CD8-positive, alpha-beta T cell (primary cell): ENCODE measurements at regions of chr20 and their contacts with region 1.

Region 1: GRCh38 chr20:45771182-45771759 is 20.4 kb downstream of the WFDC3 start:
- DNase-seq: peak; percentile 58 to 87 (median 80)
- ATAC-seq: peak; percentile 90
- H3K4me3 ChIP-seq: no peak overlapping the region
- H3K4me3 Mint-ChIP-seq: no peak overlapping the region
- H3K27ac ChIP-seq: no peak overlapping the region
- H3K27ac Mint-ChIP-seq: no peak overlapping the region
- H3K4me1 ChIP-seq: peaks cover 4% of the 10 kb centered on the region
- H3K4me1 Mint-ChIP-seq: peaks cover 5% of the 10 kb centered on the region
- H3K27me3 ChIP-seq: no peaks in the 10 kb centered on the region
- H3K27me3 Mint-ChIP-seq: peaks cover 19% of the 10 kb centered on the region
- CTCF ChIP-seq: peak; percentile 91

Region 2: GRCh38 chr20:45311589-45312211 is 459.6 kb before region 1 on chr20:
- CTCF ChIA-PET with region 1: interaction called, 168 read pairs
- POLR2A ChIA-PET with region 1: no interaction called
- intact Hi-C with region 1: no loop called
- DNase-seq: peak; percentile 24 to 69 (median 52)
- ATAC-seq: peak; percentile 66
- H3K4me3 ChIP-seq: no peak overlapping the region
- H3K4me3 Mint-ChIP-seq: no peak overlapping the region
- H3K27ac ChIP-seq: no peak overlapping the region
- H3K27ac Mint-ChIP-seq: no peak overlapping the region
- H3K4me1 ChIP-seq: no peaks in the 10 kb centered on the region
- H3K4me1 Mint-ChIP-seq: peaks cover 6% of the 10 kb centered on the region
- H3K27me3 ChIP-seq: peaks cover 0 to 10% of the 10 kb centered on the region in 2 experiments
- H3K27me3 Mint-ChIP-seq: peaks cover 48% of the 10 kb centered on the region
- CTCF ChIP-seq: peak; percentile 67

Region 3: GRCh38 chr20:45362804-45363610 is 408.3 kb before region 1 on chr20 and contains the start of gene SYS1:
- CTCF ChIA-PET with region 1: interaction called, 29 read pairs
- POLR2A ChIA-PET with region 1: no interaction called
- intact Hi-C with region 1: loop called (anchors 1 to 2 kb)
- DNase-seq: peak; percentile 97 to 99 (median 99)
- ATAC-seq: peak; percentile 86
- H3K4me3 ChIP-seq: peak within 1 kb of the TSS; percentile 91 to 99
- H3K4me3 Mint-ChIP-seq: peak within 1 kb of the TSS; percentile 100
- H3K27ac ChIP-seq: peak within 1 kb of the TSS; percentile 92 to 100
- H3K27ac Mint-ChIP-seq: peak within 1 kb of the TSS; percentile 100
- H3K4me1 ChIP-seq: peaks cover 33% of the 10 kb centered on the region
- H3K4me1 Mint-ChIP-seq: peaks cover 49% of the 10 kb centered on the region
- H3K27me3 ChIP-seq: no peaks in the 10 kb centered on the region
- H3K27me3 Mint-ChIP-seq: no peaks in the 10 kb centered on the region
- CTCF ChIP-seq: peak; percentile 89
- total RNA-seq, gene SYS1: 111 to 116 TPM

Region 4: DNA sequence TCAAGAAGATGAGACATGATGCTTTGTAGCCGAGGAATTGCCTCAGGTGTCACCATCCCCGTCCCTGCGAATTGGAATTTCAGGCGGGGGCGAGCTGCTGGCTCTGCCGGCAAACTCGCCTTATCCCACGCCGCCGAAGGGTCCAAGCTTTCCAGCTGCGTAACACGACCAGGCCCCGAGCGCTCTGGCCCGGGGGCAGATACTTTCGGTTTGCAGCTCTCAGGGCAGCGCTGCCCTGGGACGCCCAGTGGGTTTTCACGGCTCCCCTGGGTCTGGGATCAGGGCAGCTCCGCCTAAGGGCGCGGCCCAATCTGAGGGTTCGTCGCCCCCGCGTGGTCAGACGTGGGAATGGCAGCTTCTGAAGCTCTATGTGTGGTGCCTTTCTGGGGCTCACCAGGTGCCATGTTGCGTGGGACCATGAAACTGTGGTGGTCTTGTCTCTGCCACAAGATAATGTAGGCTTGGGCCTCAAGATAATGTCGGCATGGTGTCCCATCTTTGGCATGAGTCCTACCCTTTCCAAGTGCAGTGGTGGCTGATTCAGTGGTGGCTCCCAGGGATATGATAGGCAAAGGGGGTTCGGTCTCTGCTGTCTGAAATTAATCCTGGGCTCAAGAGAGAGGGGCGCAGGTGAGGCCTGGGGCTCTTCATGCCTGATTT is 334.4 kb before region 1 on chr20:
- CTCF ChIA-PET with region 1: interaction called, 18 read pairs
- POLR2A ChIA-PET with region 1: no interaction called
- intact Hi-C with region 1: loop called in 1 of 2 experiments (anchors 5 kb)
- DNase-seq: peak; percentile 67 to 94 (median 90)
- ATAC-seq: peak; percentile 99
- H3K4me3 ChIP-seq: peak overlapping the region; percentile 56 to 60
- H3K4me3 Mint-ChIP-seq: peak overlapping the region; percentile 80
- H3K27ac ChIP-seq: peak overlapping the region in 1 of 2 experiments; percentile 53
- H3K27ac Mint-ChIP-seq: peak overlapping the region; percentile 32
- H3K4me1 ChIP-seq: peaks cover 15% of the 10 kb centered on the region
- H3K4me1 Mint-ChIP-seq: peaks cover 16% of the 10 kb centered on the region
- H3K27me3 ChIP-seq: no peaks in the 10 kb centered on the region
- H3K27me3 Mint-ChIP-seq: no peaks in the 10 kb centered on the region
- CTCF ChIP-seq: peak; percentile 84

Region 5: GRCh38 chr20:45545754-45546453 is 225.4 kb before region 1 on chr20:
- CTCF ChIA-PET with region 1: no interaction called
- POLR2A ChIA-PET with region 1: no interaction called
- intact Hi-C with region 1: loop called in 1 of 2 experiments (anchors 2 kb)
- DNase-seq: no peak
- ATAC-seq: no peak
- H3K4me3 ChIP-seq: no peak overlapping the region
- H3K4me3 Mint-ChIP-seq: no peak overlapping the region
- H3K27ac ChIP-seq: no peak overlapping the region
- H3K27ac Mint-ChIP-seq: no peak overlapping the region
- H3K4me1 ChIP-seq: no peaks in the 10 kb centered on the region
- H3K4me1 Mint-ChIP-seq: no peaks in the 10 kb centered on the region
- H3K27me3 ChIP-seq: peaks cover 0 to 4% of the 10 kb centered on the region in 2 experiments
- H3K27me3 Mint-ChIP-seq: peaks cover 29% of the 10 kb centered on the region
- CTCF ChIP-seq: no peak